ENCODE measurements at regions of chr1 and their contacts with region 1.

Region 1: DNA sequence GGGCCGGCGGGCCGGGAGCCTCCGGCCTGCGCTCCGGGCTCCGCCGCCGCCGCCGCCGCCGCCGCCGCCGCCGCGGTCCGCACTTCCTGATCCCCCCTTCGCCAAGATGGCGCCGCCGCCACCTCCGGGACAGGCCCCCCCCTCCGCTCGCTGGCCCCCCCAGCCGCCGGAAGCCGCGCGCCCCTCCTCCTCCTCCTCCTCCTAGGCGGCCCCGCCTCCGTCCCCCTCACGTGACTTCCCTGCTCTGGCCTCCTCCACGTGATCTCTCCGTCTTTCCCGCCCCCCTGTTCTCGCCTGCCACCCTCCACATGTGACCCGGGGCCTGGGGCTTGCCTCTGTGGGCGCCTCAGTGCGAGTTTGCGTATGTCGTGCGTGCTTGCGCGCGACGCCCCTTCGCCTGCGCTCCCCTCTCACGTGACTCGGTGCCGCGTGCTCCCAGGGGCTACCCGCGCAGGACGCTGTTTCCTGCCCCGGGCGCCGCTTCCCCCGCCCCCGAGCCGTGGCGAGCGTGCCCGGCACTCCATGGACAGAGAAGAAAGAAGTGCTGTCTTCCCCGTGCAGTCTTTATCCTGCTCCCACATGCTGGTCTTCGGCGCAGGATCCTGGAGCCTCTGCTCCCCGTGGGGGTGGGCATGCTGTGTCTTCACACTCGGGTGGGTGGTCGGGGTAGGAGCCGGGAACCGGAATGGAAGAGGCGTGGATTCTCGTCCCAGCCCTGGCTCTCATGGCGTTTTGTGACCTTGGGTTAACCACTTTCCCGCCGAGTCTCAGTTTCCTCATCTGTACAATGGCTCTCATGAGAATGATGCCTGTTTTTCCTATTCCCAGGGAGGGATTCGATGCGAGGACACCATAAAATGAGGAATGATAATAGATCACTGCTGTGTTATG is at the start of gene UBE2Q1:
- DNase-seq: peak; percentile 98
- CTCF ChIP-seq: no peak

Region 2: DNA sequence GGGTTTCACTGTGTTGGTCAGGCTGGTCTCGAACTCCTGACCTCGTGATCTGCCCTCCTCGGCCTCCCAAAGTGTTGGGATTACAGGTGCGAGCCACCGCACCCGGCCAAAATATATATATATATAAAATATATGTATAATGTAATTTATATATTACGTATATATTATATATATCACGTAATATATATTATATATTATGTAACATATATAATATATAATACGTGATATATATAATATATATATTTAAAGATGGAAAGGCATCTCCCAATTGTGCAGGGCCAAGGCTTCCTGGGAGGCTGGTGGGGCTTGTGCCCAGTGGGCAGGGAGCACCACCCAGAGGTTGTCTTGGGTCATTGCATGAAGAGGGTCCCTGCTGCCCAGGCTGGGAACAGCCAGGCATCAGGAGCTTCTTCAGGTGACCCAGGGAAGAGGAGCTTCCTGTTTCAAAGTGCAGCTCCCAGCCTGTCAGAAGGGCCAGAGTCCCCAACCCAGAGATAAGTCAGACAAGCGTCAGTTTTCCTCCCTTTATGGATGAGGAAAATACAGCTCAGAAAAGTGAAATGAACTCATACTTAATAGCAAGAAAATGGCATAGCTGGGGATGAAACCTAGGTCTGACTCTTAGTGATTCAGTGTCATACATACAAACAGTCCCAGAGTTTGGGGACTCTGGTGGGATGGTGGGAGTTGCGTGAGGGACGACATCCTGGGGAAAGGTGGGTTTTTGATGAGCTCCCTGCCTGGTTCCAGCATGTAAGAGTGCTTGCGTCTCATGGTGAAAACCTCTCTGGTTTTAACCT is 12.4 kb before region 1 on chr1:
- CTCF ChIA-PET with region 1: interaction called, 37 read pairs
- POLR2A ChIA-PET with region 1: no interaction called
- DNase-seq: peak; percentile 82
- CTCF ChIP-seq: peak; percentile 89

Region 3: DNA sequence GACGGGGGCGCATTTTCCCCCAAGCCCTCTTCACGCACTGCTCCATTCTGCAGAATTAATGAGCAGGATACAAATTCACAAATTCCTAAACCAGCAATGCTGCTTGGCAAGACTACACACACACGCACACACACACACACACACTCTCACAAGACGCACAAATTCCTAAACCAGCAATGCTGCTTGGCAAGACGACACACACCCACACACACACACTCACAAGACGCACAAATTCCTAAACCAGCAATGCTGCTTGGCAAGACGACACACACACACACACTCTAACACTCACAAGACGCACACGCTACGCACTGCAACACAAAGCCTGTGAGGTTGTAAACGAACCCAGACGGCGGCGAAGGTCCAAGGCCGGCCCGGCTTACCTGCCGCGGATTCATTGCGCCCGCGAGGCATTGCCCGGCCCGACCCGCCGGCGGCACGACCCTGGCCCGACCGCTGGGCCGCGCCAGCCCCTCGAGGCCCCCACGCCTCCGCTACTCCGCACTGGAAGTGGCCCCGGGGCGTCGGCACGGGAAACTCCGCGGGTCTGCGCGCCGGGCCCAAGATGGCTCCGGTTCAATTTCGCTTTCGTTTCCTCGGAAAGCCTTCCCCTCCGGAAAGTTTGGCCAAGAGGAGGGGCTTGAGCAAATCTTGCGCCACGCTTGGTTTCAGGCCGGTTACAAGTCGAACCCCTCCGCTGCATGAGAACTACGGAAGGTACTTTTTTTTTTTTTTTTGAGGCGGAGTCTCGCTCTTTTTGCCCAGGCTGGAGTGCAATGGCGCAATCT is 49.0 kb after region 1 on chr1 and contains the start of gene ADAR:
- CTCF ChIA-PET with region 1: interaction called, 18 read pairs
- POLR2A ChIA-PET with region 1: no interaction called
- DNase-seq: peak; percentile 90
- CTCF ChIP-seq: peak; percentile 9

Region 4: DNA sequence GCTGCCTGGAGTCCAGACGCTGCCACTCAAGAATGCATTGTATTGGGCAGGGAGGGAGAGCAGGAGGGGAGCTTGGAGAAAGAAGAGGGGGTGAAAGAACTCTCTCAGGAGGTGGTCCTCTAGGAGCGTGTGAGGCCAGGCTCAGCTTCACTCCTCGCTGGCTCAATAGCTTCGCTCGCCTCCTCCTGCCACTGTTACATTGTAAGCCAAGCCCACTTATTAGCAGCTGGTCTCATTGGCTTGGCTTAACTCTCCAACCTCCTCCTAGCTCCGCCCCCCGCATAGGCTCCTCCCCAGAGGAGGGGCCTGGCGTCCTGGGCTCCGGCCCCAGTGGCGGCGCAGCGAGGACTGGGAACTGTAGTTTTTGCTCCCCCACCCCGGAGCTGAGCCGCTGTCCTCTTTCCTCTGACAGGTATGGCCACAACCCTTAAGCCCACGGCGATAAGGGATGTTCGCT is 311.3 kb after region 1 on chr1 and contains the start of gene KCNN3:
- CTCF ChIA-PET with region 1: interaction called, 11 read pairs
- POLR2A ChIA-PET with region 1: no interaction called
- DNase-seq: peak; percentile 98
- CTCF ChIP-seq: no peak

Region 5: DNA sequence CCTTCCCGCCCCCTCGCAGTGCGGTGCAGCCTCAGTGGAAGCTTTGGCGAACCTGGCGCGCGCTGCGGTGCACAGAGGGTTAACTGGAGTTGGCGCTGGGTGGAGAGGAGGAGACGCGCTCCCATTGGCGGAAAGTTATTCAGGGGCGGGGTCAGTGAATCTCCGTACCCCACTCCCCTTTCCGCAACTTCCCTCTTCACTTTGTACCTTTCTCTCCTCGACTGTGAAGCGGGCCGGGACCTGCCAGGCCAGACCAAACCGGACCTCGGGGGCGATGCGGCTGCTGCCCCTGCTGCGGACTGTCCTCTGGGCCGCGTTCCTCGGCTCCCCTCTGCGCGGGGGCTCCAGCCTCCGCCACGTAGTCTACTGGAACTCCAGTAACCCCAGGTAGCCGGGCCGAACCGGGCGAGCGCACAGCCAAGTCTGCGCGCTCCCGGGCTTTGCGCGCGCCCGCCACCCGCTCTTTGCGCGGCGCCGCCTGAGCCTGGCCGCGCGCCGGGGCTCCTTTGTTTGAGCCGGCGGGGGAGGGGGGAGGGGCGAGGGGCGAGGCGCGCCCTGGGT is 504.8 kb after region 1 on chr1 and contains the start of gene EFNA4:
- CTCF ChIA-PET with region 1: interaction called, 26 read pairs
- POLR2A ChIA-PET with region 1: no interaction called
- DNase-seq: peak; percentile 91
- CTCF ChIP-seq: no peak